K562 (cell line): ENCODE measurements at regions of chr19 and their contacts with region 1.

Region 1: DNA sequence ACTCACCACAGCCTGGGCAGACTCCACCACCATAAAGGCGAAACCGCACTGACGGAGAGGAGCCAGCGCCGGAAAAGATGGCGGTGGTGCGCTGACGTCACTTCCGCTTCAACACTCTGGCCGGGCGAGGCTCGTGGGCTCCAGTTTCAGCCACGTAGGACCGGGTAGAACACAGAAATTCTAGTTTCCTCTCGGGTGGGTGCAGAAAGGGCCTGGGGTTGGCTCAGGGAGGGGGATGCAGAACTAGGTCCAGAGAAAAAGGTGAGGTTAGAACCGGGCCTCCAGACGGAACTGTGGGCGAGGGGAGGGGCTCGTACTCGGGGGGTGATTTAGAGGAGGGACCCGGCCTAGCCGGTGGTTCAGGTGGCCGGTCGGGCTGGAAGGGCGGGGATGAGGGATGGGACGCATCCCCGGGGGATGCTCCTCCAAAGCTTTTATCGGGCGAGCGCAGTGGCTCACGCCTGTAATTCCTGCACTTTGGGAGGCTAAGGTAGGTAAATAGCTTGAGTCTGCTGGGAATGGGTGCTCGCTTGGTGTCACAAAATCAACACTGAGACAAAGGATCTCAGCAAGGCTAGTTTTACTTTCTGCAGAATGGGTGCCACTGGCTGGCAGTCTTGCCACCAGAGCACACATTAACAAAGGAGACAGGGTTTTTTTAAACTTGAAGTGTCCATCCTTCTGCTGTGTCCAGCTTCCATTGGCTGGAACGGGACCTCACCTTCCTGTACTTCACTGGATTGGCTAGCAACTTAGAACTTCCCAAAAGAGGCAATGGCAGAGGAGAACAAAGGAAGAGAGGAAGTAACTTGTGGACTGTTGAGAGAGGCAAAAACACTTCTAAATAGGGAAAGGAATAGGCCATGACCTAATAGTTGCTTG is at the start of gene ZNF561:
- DNase-seq: peak; percentile 89 to 92 (median 91)
- ATAC-seq: peak; percentile 95
- H3K4me3 ChIP-seq: peak within 1 kb of the TSS; percentile 86
- H3K27ac ChIP-seq: peak within 1 kb of the TSS; percentile 98
- H3K4me1 ChIP-seq: peaks cover 0 to 3% of the 10 kb centered on the region in 2 experiments; a peak in 2 of 5 replicates
- H3K27me3 ChIP-seq: no peaks in the 10 kb centered on the region
- CTCF ChIP-seq: no peak
- EP300 ChIP-seq: no peak
- POLR2A ChIP-seq: peak; percentile 89
- RAD21 ChIP-seq: no peak
- polyA plus RNA-seq, gene ZNF561: 19.2 to 25.6 TPM

Region 2: GRCh38 chr19:9140159-9140874 is 481.1 kb before region 1 on chr19 and contains the start of gene ZNF317:
- CTCF ChIA-PET with region 1: interaction called, 8 read pairs
- POLR2A ChIA-PET with region 1: no interaction called
- in situ Hi-C with region 1: loop called (anchors 10 kb)
- intact Hi-C with region 1: no loop called
- DNase-seq: peak; percentile 81 to 96 (median 85)
- ATAC-seq: peak; percentile 97
- H3K4me3 ChIP-seq: peak within 1 kb of the TSS; percentile 61
- H3K27ac ChIP-seq: peak within 1 kb of the TSS; percentile 92
- H3K4me1 ChIP-seq: peaks cover 0 to 9% of the 10 kb centered on the region in 2 experiments; a peak in 2 of 5 replicates
- H3K27me3 ChIP-seq: no peaks in the 10 kb centered on the region
- CTCF ChIP-seq: no peak; a peak in 1 of 6 replicates
- EP300 ChIP-seq: no peak
- POLR2A ChIP-seq: peak; percentile 95
- RAD21 ChIP-seq: no peak
- polyA plus RNA-seq, gene ZNF317: 23.9 to 37.9 TPM

Region 3: GRCh38 chr19:9584073-9584833 is 37.1 kb before region 1 on chr19 and contains the start of gene ZNF121:
- CTCF ChIA-PET with region 1: no interaction called
- POLR2A ChIA-PET with region 1: no interaction called
- in situ Hi-C with region 1: no loop called
- intact Hi-C with region 1: loop called (anchors 5 kb)
- DNase-seq: peak; percentile 85 to 94 (median 87)
- ATAC-seq: peak; percentile 93
- H3K4me3 ChIP-seq: peak within 1 kb of the TSS; percentile 86
- H3K27ac ChIP-seq: peak within 1 kb of the TSS; percentile 99
- H3K4me1 ChIP-seq: peaks cover 0 to 6% of the 10 kb centered on the region in 2 experiments; a peak in 3 of 5 replicates
- H3K27me3 ChIP-seq: peaks cover 4% of the 10 kb centered on the region in 2 experiments; a peak in 3 of 5 replicates
- CTCF ChIP-seq: no peak
- EP300 ChIP-seq: 0 out of 2 replicates have a peak, but pooled peaks have one; percentile 12
- POLR2A ChIP-seq: peak; percentile 96
- RAD21 ChIP-seq: no peak
- polyA plus RNA-seq, gene ZNF121: 14.6 to 26.2 TPM

Region 4: GRCh38 chr19:9674663-9675357 is 53.4 kb after region 1 on chr19 and contains the start of gene ZNF562:
- CTCF ChIA-PET with region 1: no interaction called
- POLR2A ChIA-PET with region 1: no interaction called
- in situ Hi-C with region 1: no loop called
- intact Hi-C with region 1: no loop called
- DNase-seq: peak; percentile 90 to 95 (median 90)
- ATAC-seq: peak; percentile 98
- H3K4me3 ChIP-seq: peak within 1 kb of the TSS; percentile 96
- H3K27ac ChIP-seq: peak within 1 kb of the TSS; percentile 99
- H3K4me1 ChIP-seq: peaks cover 3 to 4% of the 10 kb centered on the region in 2 experiments; a peak in 3 of 5 replicates
- H3K27me3 ChIP-seq: no peaks in the 10 kb centered on the region
- CTCF ChIP-seq: no peak
- EP300 ChIP-seq: 0 out of 2 replicates have a peak, but pooled peaks have one; percentile 10
- POLR2A ChIP-seq: peak; percentile 93
- RAD21 ChIP-seq: no peak
- polyA plus RNA-seq, gene ZNF562: 11.8 to 15.1 TPM

Region 5: DNA sequence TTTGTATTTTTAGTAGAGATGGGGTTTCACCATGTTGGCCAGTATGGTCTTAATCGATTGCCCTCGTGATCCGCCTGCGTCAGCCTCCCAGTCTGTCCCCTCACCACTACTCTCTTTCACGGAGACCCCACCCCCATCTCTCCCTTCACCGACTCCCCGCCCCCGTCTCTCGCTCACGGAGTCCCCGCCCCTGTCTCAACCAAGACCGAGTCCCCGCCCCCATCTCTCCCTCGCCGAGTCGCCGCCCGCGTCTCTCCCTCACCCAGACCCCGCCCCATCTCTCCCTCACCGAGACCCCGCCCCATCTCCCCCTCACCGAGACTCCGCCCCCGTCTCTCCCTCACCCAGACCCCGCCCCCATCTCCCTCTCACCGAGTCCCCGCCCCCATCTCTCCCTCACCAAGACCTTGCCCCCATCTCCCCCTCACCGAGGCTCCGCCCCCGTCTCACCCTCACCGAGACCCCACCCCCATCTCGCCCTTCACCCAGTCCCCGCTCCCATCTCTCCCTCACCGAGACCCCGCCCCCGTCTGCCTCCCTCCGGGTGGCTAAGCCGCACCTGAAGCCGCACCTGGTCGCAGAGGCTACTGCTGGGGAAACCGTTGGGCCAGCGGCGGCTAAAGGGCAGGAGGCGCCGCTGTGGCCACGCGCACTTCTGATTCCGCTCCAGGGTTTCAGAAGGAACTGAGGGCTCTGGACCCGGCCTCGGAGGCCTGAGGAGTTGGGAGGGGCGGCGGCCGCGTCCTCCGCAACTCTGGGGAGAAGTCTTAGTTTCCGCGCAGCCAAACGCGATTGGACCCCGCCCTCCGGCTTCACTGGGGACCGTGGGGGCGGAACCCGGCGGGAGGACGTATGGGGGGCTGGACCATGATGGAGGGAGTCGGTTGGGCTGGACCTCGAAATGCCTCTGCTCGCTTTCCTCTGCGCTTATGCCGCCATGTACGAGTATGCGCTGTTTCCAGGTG is 164.3 kb after region 1 on chr19:
- CTCF ChIA-PET with region 1: interaction called, 12 read pairs
- POLR2A ChIA-PET with region 1: no interaction called
- in situ Hi-C with region 1: loop called (anchors 5 kb)
- intact Hi-C with region 1: loop called (anchors 1 kb)
- DNase-seq: peak; percentile 96 to 98 (median 97)
- ATAC-seq: peak; percentile 84
- H3K4me3 ChIP-seq: peak overlapping the region; percentile 88
- H3K27ac ChIP-seq: peak overlapping the region; percentile 96
- H3K4me1 ChIP-seq: peaks cover 40 to 49% of the 10 kb centered on the region in 2 experiments
- H3K27me3 ChIP-seq: no peaks in the 10 kb centered on the region
- CTCF ChIP-seq: peak in 1 of 3 experiments; percentile 3; a peak in 1 of 6 replicates
- EP300 ChIP-seq: no peak; the same call in 1 of the 2 replicates
- POLR2A ChIP-seq: peak; percentile 93
- RAD21 ChIP-seq: peak in 1 of 2 experiments; percentile 10; a peak in 1 of 4 replicates

Region 6: GRCh38 chr19:9847087-9847671 is 225.8 kb after region 1 on chr19:
- CTCF ChIA-PET with region 1: interaction called, 10 read pairs
- POLR2A ChIA-PET with region 1: no interaction called
- in situ Hi-C with region 1: no loop called
- intact Hi-C with region 1: no loop called
- DNase-seq: peak; percentile 73 to 80 (median 77)
- ATAC-seq: peak; percentile 92
- H3K4me3 ChIP-seq: no peak overlapping the region
- H3K27ac ChIP-seq: no peak overlapping the region
- H3K4me1 ChIP-seq: peaks cover 0 to 36% of the 10 kb centered on the region in 2 experiments; a peak in 3 of 5 replicates
- H3K27me3 ChIP-seq: no peaks in the 10 kb centered on the region
- CTCF ChIP-seq: peak; percentile 70 to 78 (median 74)
- EP300 ChIP-seq: no peak
- POLR2A ChIP-seq: no peak
- RAD21 ChIP-seq: peak; percentile 19 to 62; a peak in 3 of 4 replicates

Region 7: DNA sequence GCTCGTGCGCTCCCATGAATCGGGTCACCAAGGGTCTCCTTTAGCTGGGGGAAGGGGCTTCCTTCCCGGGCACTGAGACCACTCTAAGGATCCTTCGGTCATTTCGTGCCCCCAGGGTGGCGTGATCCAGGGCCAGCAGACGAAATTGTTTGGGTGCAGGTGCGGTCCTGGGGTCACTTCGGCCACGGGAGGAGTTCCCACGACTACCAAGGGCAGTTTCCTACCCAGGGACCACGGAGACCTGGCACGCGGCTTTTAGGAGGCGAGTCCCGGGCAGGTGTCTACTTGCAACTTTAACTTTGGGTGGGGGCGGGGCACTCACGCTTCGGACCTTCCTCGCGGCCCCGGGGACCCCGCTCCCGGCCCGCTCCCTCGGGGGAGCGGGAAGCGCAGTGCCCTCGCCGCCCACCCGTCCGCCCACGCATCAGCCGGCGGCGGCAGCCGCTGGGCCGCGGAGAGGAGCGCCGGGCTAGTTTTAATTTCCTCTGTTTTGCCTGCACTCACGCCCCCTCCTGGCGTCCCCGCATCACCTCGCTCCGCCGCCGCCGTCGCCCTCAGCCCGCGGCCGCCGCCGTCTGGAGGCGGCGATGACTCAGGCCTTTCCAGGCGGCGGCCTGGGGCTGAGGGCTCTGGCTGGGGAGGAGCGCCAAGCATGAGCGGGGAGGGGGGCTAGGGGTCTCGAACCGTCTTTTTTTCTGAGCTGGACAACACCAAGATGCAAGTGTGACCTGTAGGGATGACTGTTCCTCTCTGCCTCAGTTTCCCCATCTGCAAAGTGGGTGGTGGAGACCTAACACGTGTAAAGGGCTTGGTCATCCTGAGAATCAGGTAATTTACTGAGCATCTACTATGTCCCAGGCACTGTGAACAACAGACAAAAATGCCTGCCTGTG is 293.2 kb after region 1 on chr19:
- CTCF ChIA-PET with region 1: no interaction called
- POLR2A ChIA-PET with region 1: no interaction called
- in situ Hi-C with region 1: no loop called
- intact Hi-C with region 1: loop called (anchors 10 kb)
- DNase-seq: peak; percentile 89 to 94 (median 90)
- ATAC-seq: peak; percentile 94
- H3K4me3 ChIP-seq: peak overlapping the region; percentile 53
- H3K27ac ChIP-seq: peak overlapping the region; percentile 66
- H3K4me1 ChIP-seq: peaks cover 6 to 20% of the 10 kb centered on the region in 2 experiments; a peak in 4 of 5 replicates
- H3K27me3 ChIP-seq: peaks cover 0 to 25% of the 10 kb centered on the region in 2 experiments; a peak in 3 of 5 replicates
- CTCF ChIP-seq: peak; percentile 67 to 96 (median 80)
- EP300 ChIP-seq: peak; percentile 42; the same call in 1 of the 2 replicates
- POLR2A ChIP-seq: no peak
- RAD21 ChIP-seq: peak; percentile 79 to 82